Mammary epithelial cell (primary cell): ENCODE measurements at regions of chr1 and their contacts with region 1.

Region 1: DNA sequence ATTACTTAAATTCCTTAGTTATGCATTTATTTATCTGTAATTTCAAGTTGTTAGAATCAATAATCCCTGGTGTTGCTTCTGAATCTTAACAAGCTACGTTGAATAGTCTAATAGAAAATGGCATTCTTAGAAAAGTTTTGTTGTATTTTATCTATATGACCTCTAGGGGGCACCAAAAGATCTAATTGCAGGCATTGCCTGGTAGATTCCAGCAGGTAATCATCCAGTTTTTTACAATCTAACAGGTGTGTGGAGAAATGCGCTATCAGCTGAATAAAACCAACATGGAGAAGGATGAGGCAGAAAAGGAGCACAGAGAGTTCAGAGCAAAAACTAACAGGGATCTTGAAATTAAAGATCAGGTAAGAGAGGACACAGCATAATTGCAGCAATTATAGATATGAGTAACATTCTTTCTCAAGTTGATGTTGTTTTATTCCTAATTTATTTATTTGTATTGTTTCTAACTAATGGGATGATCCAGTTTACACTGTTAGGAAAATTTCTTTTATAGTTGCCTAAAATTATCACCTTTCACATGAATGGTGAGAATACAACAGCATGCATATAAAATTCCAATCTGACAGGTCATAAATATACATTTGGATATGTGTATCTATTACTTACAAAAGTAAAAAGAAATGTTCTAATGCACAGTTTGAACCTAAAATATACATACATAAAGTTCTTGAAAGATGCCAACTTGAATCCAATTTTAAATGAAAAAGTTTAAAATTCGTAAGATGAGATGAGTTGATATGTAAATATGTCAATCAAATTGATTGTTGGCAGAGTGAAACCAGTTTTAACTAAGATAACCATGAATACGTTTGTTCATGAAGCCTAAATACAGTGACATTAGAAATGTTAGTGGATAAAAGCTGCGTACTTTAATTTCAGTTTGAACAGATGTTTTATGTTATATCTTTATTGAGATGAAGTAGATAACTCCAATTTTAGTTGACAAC is 88.4 kb downstream of the SDCCAG8 start:
- DNase-seq: peak; percentile 37
- H3K4me3 ChIP-seq: no peak overlapping the region
- H3K27ac ChIP-seq: no peak overlapping the region
- H3K4me1 ChIP-seq: no peaks in the 10 kb centered on the region
- H3K27me3 ChIP-seq: no peaks in the 10 kb centered on the region
- CTCF ChIP-seq: peak; percentile 31 to 66

Region 2: GRCh38 chr1:243364866-243365265 is 20.6 kb after region 1 on chr1:
- CTCF ChIA-PET with region 1: no interaction called
- dilution Hi-C with region 1: no loop called
- in situ Hi-C with region 1: no loop called
- intact Hi-C with region 1: no loop called
- DNase-seq: no peak
- H3K4me3 ChIP-seq: no peak overlapping the region
- H3K27ac ChIP-seq: no peak overlapping the region
- H3K4me1 ChIP-seq: no peaks in the 10 kb centered on the region
- H3K27me3 ChIP-seq: no peaks in the 10 kb centered on the region
- CTCF ChIP-seq: no peak

Region 3: DNA sequence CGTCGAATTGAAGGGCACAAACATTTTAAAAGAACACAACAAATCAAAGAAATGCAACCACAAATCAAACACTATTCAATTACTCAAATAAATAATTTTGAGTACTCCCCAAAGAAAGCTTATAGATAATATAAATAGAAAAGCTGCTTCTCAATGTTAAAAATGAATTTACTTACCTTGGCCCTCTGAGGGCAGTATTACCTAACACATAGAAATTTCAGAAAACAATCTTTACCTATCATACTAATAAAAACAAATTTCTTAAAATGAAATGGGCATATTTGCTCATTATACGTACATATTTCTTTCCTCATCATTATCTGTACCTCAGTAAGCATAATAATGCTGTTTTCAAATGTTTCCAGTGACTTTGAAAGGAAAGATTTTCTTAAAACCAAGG is 364.0 kb after region 1 on chr1:
- CTCF ChIA-PET with region 1: no interaction called
- dilution Hi-C with region 1: no loop called
- in situ Hi-C with region 1: no loop called
- intact Hi-C with region 1: loop called (anchors 2 kb)
- DNase-seq: no peak
- H3K4me3 ChIP-seq: no peak overlapping the region
- H3K27ac ChIP-seq: no peak overlapping the region
- H3K4me1 ChIP-seq: no peaks in the 10 kb centered on the region
- H3K27me3 ChIP-seq: no peaks in the 10 kb centered on the region
- CTCF ChIP-seq: peak; percentile 17 to 39

Region 4: GRCh38 chr1:243946946-243947345 is 602.7 kb after region 1 on chr1:
- CTCF ChIA-PET with region 1: no interaction called
- dilution Hi-C with region 1: no loop called
- in situ Hi-C with region 1: no loop called
- intact Hi-C with region 1: loop called (anchors 1 kb)
- DNase-seq: peak; percentile 8
- H3K4me3 ChIP-seq: no peak overlapping the region
- H3K27ac ChIP-seq: no peak overlapping the region
- H3K4me1 ChIP-seq: peaks cover 20% of the 10 kb centered on the region
- H3K27me3 ChIP-seq: no peaks in the 10 kb centered on the region
- CTCF ChIP-seq: peak; percentile 42 to 45

Region 5: DNA sequence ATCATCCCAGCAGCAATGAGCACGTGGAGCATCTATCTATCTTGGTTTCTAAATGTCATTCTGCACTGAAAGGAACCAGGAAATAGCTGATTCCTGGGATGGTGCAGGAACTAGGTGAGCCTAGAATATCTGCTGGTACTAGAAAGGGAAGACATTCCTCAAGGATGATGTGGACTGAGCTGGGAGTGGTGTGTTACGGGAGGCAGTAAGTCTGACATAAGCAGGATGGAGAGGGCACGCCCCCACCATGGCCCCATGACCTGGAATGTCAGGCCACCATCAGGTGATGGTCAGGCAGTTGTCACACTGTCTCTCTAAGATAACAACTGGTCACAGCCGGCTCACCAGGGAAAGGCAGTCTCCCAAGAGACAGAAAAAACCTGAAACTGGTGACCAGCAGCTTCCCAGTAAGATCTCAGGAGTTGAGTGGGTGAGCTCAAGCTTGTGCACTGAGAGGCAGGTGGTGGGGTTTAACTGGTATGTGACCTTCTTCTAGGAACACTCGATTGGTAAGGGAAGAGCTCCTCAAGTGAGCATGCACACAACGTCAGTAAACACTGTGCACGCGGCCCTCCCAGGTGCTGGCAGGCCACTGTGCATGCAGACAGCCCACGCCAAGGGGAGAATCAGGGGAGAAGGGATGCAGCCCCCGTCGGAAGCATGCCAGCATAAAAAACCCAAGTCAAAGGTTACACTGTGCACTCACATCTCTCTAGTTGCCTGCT is 958.8 kb after region 1 on chr1:
- CTCF ChIA-PET with region 1: no interaction called
- dilution Hi-C with region 1: no loop called
- in situ Hi-C with region 1: no loop called
- intact Hi-C with region 1: loop called (anchors 1 kb)
- DNase-seq: peak; percentile 72
- H3K4me3 ChIP-seq: no peak overlapping the region
- H3K27ac ChIP-seq: no peak overlapping the region
- H3K4me1 ChIP-seq: peaks cover 15% of the 10 kb centered on the region
- H3K27me3 ChIP-seq: no peaks in the 10 kb centered on the region
- CTCF ChIP-seq: no peak